ENCODE measurements at regions of chr9 and their contacts with region 1.

Region 1: DNA sequence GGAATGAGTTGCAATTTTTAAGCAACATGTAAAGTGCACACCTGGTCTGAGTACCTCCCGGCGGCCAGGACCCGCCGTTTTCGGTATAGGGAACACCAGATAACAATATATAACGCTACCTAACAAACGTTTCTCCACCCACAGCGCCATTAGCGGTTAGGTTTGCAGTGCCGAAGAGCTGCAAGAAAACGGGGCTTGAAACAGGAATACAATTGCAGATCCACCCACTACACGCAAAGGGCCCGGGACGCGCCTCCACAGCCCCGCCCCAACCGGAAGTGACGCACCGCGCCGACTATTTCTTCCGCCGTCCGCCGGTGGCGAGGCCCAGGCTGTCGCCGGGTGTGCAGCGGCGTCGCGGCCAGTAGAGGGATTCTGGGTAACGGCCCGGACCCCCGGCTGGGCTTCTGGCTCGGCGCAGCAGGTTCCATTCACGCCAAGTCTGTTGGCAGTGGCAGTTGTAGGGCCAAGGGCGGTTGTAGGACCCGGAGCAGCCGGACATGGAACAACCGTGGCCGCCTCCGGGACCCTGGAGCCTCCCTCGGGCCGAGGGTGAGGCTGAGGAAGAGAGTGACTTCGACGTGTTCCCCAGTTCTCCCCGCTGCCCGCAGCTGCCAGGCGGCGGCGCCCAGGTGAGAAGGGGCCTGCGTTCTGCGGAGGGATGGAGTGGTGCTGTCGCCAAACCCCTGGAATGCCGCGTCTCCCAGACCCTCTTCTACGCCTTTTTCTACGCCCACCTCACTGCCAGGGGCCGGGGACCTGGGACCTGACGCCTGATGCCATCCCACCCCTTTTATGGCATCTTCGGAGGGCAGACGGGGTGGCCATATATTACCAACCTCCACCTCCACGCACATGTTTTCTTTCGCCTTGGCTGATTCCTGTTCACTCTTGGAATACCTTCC is at the start of gene CDC37L1:
- DNase-seq: peak; percentile 100
- H3K4me3 Mint-ChIP-seq: no peak within 1 kb of the TSS
- H3K27ac Mint-ChIP-seq: no peak within 1 kb of the TSS
- H3K4me1 Mint-ChIP-seq: peaks cover 7% of the 10 kb centered on the region
- H3K27me3 Mint-ChIP-seq: no peaks in the 10 kb centered on the region
- total RNA-seq, gene CDC37L1: 11.3 and 12.1 TPM in 2 replicates

Region 2: DNA sequence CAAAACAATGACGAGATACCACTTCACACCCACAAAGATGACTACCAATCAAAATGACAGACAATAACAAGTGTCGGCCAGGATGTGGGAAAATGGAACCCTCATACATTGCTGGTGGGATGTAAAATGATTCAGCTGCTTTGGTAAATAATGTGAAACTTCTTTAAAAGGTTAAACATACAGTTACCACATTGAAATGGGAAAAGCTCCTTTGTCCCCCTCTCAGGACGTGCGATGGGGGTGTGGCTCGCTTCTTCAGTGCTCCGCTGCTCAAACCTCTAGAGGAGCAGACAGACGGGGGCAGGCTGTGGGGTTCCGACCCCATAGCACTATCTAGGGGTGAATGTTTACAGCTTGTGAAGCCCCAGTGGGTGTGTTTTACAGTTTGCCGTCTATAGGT is 25.4 kb before region 1 on chr9:
- intact Hi-C with region 1: no loop called
- DNase-seq: peak; percentile 47
- H3K4me3 Mint-ChIP-seq: no peak overlapping the region
- H3K27ac Mint-ChIP-seq: no peak overlapping the region
- H3K4me1 Mint-ChIP-seq: peaks cover 7% of the 10 kb centered on the region
- H3K27me3 Mint-ChIP-seq: peaks cover 14% of the 10 kb centered on the region

Region 3: DNA sequence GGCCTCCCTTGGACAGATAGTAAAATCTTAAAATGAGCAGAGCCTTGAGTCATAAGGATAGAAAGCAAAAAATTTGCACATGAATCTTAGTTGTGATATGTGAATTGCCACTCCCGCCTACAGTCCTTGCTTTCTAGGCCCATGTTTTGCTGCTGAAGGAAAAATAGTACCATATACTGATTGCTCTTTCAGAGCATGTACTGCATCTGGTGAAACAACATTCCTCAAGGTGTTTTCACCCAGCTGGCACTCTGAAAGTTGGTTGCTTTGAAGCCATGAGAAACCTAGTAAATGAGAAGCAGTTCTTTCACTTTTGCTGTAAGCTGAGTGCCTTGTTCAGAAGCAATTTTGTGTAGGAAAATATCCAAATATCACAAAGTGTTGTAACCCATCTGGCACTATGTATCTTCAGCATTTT is 10.2 kb after region 1 on chr9:
- intact Hi-C with region 1: loop called (anchors 1 kb)
- DNase-seq: peak; percentile 56
- H3K4me3 Mint-ChIP-seq: peak overlapping the region; percentile 9
- H3K27ac Mint-ChIP-seq: peak overlapping the region; percentile 70
- H3K4me1 Mint-ChIP-seq: peaks cover 20% of the 10 kb centered on the region
- H3K27me3 Mint-ChIP-seq: no peaks in the 10 kb centered on the region

Region 4: DNA sequence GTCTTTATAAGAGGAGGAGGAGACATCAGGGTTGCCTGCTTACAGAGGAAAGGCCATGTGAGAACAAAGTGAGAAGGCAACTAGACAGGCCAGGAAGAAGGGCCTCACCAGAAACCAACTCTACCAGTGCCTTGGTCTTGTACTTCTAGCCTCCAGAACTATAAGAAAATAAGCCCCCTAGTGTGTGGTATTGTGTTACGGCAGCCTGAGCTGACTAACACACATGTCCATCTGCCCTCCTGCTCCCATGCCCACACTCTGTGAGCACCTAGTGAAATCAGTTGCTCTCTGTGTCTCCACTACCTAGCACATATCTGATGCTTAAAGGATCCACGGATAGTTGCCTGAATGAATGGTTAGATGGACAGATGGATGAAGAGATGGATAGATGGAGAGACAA is 54.6 kb after region 1 on chr9:
- intact Hi-C with region 1: no loop called
- DNase-seq: no peak
- H3K4me3 Mint-ChIP-seq: no peak overlapping the region
- H3K27ac Mint-ChIP-seq: no peak overlapping the region
- H3K4me1 Mint-ChIP-seq: peaks cover 35% of the 10 kb centered on the region
- H3K27me3 Mint-ChIP-seq: no peaks in the 10 kb centered on the region

Measured in activated CD4-positive, alpha-beta T cell treated with anti-CD3 and anti-CD28 coated beads, Interleukin-2, amount 10 ng/mL, durations not matched to agents 24 days and 14 days (primary cell).